ENCODE measurements at regions of chr5 and their contacts with region 1.

Region 1: DNA sequence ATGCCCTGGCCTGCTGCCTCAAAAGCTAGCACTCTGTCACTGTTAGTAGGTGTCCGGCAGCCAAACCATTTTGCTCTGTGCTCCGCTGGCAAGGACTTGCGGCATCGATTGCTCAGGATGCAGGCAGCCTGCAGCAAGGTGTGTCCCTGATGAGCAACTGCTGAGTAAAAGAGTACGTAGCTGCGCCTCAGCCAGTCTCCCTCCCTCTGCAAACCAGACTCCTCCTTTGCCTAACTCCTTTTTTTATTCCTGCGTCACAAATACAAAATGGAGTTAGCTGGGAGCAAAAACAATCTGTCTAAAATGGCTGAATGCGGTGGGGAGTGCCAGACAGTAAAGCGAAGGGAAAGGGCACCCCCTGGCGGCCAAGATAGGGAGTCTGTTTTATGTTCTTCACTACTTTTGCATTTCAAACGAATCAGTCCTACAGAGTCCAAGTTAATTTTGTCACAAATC is 61.1 kb downstream of the DIAPH1 start:
- DNase-seq: peak; percentile 79
- H3K4me3 Mint-ChIP-seq: no peak overlapping the region
- H3K27ac Mint-ChIP-seq: peak overlapping the region; percentile 62
- H3K4me1 Mint-ChIP-seq: peaks cover 28% of the 10 kb centered on the region
- H3K27me3 Mint-ChIP-seq: no peaks in the 10 kb centered on the region

Region 2: DNA sequence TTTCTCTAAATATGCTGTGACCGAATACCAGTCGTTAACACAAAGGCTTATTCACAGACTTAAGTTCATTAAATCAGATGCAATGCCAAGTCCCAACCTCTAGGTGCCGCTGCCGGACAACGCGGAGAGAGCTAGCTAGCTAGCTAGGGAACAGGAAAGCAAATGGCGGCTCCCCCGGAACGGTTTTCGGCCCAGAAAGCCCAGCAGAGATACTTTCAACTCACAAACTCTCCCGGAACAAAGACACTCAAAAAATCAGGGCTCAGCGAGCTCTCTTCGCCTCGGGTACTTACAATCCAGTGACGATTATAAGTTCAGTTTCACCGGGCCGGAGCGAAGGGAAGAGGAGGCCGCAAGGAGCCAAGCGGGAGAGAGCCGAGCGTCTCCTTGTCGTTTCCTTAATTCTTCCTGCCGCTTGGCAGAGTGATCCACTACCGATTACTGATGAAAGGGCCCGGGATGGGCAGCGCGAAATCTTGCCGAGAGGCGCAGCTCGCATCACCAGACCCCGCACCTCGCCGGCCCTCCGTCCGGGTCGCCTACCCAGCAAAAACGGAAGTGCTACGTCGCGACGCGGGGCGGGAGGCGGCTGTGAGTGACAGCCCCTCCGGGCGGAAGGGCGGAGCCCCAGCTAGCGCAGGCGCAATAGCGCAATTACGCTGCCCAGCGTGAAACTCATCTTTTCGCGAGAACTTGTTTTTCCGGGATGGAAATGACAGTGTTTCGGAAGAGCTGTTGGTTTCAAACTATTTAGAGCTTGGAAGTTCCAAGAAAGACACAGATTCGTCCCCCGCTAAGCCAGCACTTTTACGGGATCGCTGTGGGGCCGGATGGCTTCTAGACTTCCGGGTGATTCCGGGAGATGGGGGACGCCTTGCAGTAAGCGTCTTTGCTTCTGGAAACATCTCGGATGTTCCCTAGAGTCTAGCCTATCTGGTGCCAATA is 237.2 kb before region 1 on chr5 and contains the start of gene TAF7:
- CTCF ChIA-PET with region 1: interaction called, 10 read pairs
- POLR2A ChIA-PET with region 1: interaction called, 7 read pairs
- DNase-seq: peak; percentile 93
- H3K4me3 Mint-ChIP-seq: peak within 1 kb of the TSS; percentile 97
- H3K27ac Mint-ChIP-seq: peak within 1 kb of the TSS; percentile 99
- H3K4me1 Mint-ChIP-seq: peaks cover 40% of the 10 kb centered on the region
- H3K27me3 Mint-ChIP-seq: peaks cover 1% of the 10 kb centered on the region
- total RNA-seq, gene TAF7: 74.3 to 75.1 TPM

Region 3: GRCh38 chr5:141524604-141525597 is 32.8 kb before region 1 on chr5:
- CTCF ChIA-PET with region 1: interaction called, 12 read pairs
- POLR2A ChIA-PET with region 1: no interaction called
- DNase-seq: peak; percentile 51
- H3K4me3 Mint-ChIP-seq: no peak overlapping the region
- H3K27ac Mint-ChIP-seq: no peak overlapping the region
- H3K4me1 Mint-ChIP-seq: peaks cover 25% of the 10 kb centered on the region
- H3K27me3 Mint-ChIP-seq: no peaks in the 10 kb centered on the region

Region 4: GRCh38 chr5:141547488-141547887 is 10.2 kb before region 1 on chr5:
- CTCF ChIA-PET with region 1: interaction called, 14 read pairs
- POLR2A ChIA-PET with region 1: no interaction called
- DNase-seq: no peak
- H3K4me3 Mint-ChIP-seq: no peak overlapping the region
- H3K27ac Mint-ChIP-seq: no peak overlapping the region
- H3K4me1 Mint-ChIP-seq: peaks cover 2% of the 10 kb centered on the region
- H3K27me3 Mint-ChIP-seq: no peaks in the 10 kb centered on the region